CD8-positive, alpha-beta T cell (primary cell): ENCODE measurements at regions of chr22 and their contacts with region 1.

Region 1: GRCh38 chr22:37121887-37122591 is 12.5 kb upstream of the TMPRSS6 start:
- DNase-seq: peak; percentile 81 to 99 (median 89)
- ATAC-seq: peak; percentile 95
- H3K4me3 ChIP-seq: peak overlapping the region; percentile 18 to 34
- H3K4me3 Mint-ChIP-seq: peak overlapping the region; percentile 71
- H3K27ac ChIP-seq: peak overlapping the region; percentile 93 to 98
- H3K27ac Mint-ChIP-seq: peak overlapping the region; percentile 99
- H3K4me1 ChIP-seq: peaks cover 36% of the 10 kb centered on the region
- H3K4me1 Mint-ChIP-seq: peaks cover 55% of the 10 kb centered on the region
- H3K27me3 ChIP-seq: no peaks in the 10 kb centered on the region
- H3K27me3 Mint-ChIP-seq: no peaks in the 10 kb centered on the region
- CTCF ChIP-seq: no peak

Region 2: GRCh38 chr22:37077884-37078485 is 44.1 kb before region 1 on chr22:
- CTCF ChIA-PET with region 1: interaction called, 7 read pairs
- POLR2A ChIA-PET with region 1: interaction called, 15 read pairs
- intact Hi-C with region 1: loop called (anchors 1 kb)
- DNase-seq: peak; percentile 68 to 93 (median 83)
- ATAC-seq: peak; percentile 14
- H3K4me3 ChIP-seq: no peak overlapping the region
- H3K4me3 Mint-ChIP-seq: peak overlapping the region; percentile 47
- H3K27ac ChIP-seq: peak overlapping the region in 1 of 2 experiments; percentile 51
- H3K27ac Mint-ChIP-seq: peak overlapping the region; percentile 99
- H3K4me1 ChIP-seq: peaks cover 39% of the 10 kb centered on the region
- H3K4me1 Mint-ChIP-seq: peaks cover 31% of the 10 kb centered on the region
- H3K27me3 ChIP-seq: no peaks in the 10 kb centered on the region
- H3K27me3 Mint-ChIP-seq: peaks cover 3% of the 10 kb centered on the region
- CTCF ChIP-seq: peak; percentile 98

Region 3: GRCh38 chr22:37148742-37149665 is 27.0 kb after region 1 on chr22:
- CTCF ChIA-PET with region 1: interaction called, 6 read pairs
- POLR2A ChIA-PET with region 1: interaction called, 31 read pairs
- intact Hi-C with region 1: loop called (anchors 1 kb)
- DNase-seq: peak in 1 of 9 experiments; percentile 36
- ATAC-seq: no peak
- H3K4me3 ChIP-seq: peak overlapping the region; percentile 91 to 98
- H3K4me3 Mint-ChIP-seq: peak overlapping the region; percentile 96
- H3K27ac ChIP-seq: peak overlapping the region; percentile 84 to 94
- H3K27ac Mint-ChIP-seq: peak overlapping the region; percentile 96
- H3K4me1 ChIP-seq: peaks cover 60% of the 10 kb centered on the region
- H3K4me1 Mint-ChIP-seq: peaks cover 61% of the 10 kb centered on the region
- H3K27me3 ChIP-seq: no peaks in the 10 kb centered on the region
- H3K27me3 Mint-ChIP-seq: no peaks in the 10 kb centered on the region
- CTCF ChIP-seq: no peak

Region 4: DNA sequence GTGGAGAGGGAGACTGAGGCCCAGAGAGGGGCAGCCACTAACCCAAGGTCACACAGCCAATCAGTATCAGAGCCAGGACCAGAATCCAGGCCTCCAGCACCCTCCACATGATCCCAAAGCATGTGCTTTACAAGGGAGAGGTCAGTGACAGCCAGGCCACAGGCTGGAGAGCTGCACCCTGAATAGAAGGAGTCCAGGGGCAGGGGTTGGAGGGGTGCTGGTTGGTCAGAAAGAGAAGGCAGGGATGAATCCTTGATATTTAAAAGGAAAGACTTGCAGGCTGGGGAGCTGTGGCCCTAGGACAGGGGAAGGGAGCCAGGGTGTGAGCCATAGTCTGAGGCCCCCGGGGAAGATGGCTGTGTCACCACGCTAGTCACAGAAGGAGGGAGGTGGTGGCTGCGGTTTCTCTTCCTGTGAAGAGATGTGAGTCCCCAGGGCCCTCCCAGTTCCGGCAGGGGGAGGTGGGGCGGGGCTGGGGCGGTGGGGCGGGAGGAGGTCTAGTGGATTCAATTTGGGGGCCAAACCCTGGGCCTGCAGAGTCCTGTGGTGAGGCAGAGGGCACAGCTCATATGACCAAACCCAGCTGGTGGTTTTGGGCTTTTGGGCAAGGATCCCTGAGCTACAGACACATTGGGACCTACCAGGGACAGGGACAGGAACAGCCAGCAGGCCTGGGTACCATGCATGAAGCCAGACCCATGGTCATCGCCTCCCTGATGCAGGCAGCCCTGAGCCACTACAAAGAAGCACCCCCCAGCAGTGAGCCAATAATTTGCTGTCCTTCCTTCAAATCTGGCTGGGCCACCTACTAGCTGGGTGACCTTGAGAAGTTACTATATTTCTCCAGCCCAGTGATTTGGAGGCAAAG is 108.0 kb after region 1 on chr22:
- CTCF ChIA-PET with region 1: interaction called, 3 read pairs
- POLR2A ChIA-PET with region 1: interaction called, 12 read pairs
- intact Hi-C with region 1: loop called in 1 of 2 experiments (anchors 1 kb)
- DNase-seq: peak; percentile 80 to 97 (median 91)
- ATAC-seq: peak; percentile 68
- H3K4me3 ChIP-seq: peak overlapping the region; percentile 36 to 52
- H3K4me3 Mint-ChIP-seq: peak overlapping the region; percentile 80
- H3K27ac ChIP-seq: peak overlapping the region; percentile 75 to 92
- H3K27ac Mint-ChIP-seq: peak overlapping the region; percentile 100
- H3K4me1 ChIP-seq: peaks cover 94% of the 10 kb centered on the region
- H3K4me1 Mint-ChIP-seq: peaks cover 91% of the 10 kb centered on the region
- H3K27me3 ChIP-seq: no peaks in the 10 kb centered on the region
- H3K27me3 Mint-ChIP-seq: no peaks in the 10 kb centered on the region
- CTCF ChIP-seq: no peak

Region 5: GRCh38 chr22:37282385-37282677 is 160.3 kb after region 1 on chr22 and contains the start of gene CYTH4:
- CTCF ChIA-PET with region 1: no interaction called
- POLR2A ChIA-PET with region 1: no interaction called
- intact Hi-C with region 1: loop called in 1 of 2 experiments (anchors 1 kb)
- DNase-seq: peak; percentile 34 to 88 (median 82)
- ATAC-seq: peak; percentile 76
- H3K4me3 ChIP-seq: peak within 1 kb of the TSS; percentile 84 to 98
- H3K4me3 Mint-ChIP-seq: peak within 1 kb of the TSS; percentile 89
- H3K27ac ChIP-seq: peak within 1 kb of the TSS; percentile 82 to 84
- H3K27ac Mint-ChIP-seq: peak within 1 kb of the TSS; percentile 98
- H3K4me1 ChIP-seq: peaks cover 45% of the 10 kb centered on the region
- H3K4me1 Mint-ChIP-seq: peaks cover 60% of the 10 kb centered on the region
- H3K27me3 ChIP-seq: no peaks in the 10 kb centered on the region
- H3K27me3 Mint-ChIP-seq: no peaks in the 10 kb centered on the region
- CTCF ChIP-seq: no peak
- total RNA-seq, gene CYTH4: 129 to 143 TPM